Activated CD4-positive, alpha-beta T cell treated with anti-CD3 and anti-CD28 coated beads for 36 hours (primary cell): ENCODE measurements at regions of chr1 and their contacts with region 1.

Region 1: GRCh38 chr1:205485338-205486228 is 18.9 kb upstream of the CDK18 start:
- DNase-seq: peak; percentile 78
- ATAC-seq: peak; percentile 69
- H3K4me3 Mint-ChIP-seq: no peak overlapping the region
- H3K27ac Mint-ChIP-seq: no peak overlapping the region
- H3K4me1 Mint-ChIP-seq: peaks cover 10% of the 10 kb centered on the region
- H3K27me3 Mint-ChIP-seq: peaks cover 40% of the 10 kb centered on the region

Region 2: DNA sequence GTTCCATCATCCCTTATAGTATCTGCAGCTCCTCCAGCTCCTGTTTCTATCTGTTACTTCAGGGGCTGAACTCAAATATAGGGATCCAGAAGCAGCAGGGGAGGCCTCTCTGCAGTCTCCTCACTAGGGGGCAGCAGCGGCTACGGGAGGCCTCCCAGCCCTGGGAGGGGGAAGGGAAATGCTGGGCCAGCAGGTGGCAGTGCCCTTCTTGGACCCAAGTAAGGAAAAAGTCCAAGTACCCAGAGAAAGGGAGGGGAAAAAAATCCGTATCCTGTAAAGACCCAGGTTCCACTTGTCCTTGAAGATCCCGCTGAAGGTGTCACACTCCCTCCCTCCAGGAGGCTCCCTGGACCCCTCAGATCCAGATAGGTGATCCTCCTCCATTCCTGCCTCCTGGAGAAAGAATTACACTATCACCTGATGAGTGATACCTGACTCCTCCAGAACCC is 149.9 kb before region 1 on chr1:
- CTCF ChIA-PET with region 1: interaction called, 12 read pairs
- POLR2A ChIA-PET with region 1: no interaction called
- intact Hi-C with region 1: loop called (anchors 1 to 5 kb)
- DNase-seq: peak; percentile 92
- ATAC-seq: peak; percentile 96
- H3K4me3 Mint-ChIP-seq: no peak overlapping the region
- H3K27ac Mint-ChIP-seq: no peak overlapping the region
- H3K4me1 Mint-ChIP-seq: no peaks in the 10 kb centered on the region
- H3K27me3 Mint-ChIP-seq: no peaks in the 10 kb centered on the region

Region 3: GRCh38 chr1:205359771-205360565 is 125.6 kb before region 1 on chr1:
- CTCF ChIA-PET with region 1: interaction called, 82 read pairs
- POLR2A ChIA-PET with region 1: no interaction called
- intact Hi-C with region 1: no loop called
- DNase-seq: no peak
- ATAC-seq: no peak
- H3K4me3 Mint-ChIP-seq: no peak overlapping the region
- H3K27ac Mint-ChIP-seq: no peak overlapping the region
- H3K4me1 Mint-ChIP-seq: no peaks in the 10 kb centered on the region
- H3K27me3 Mint-ChIP-seq: peaks cover 15% of the 10 kb centered on the region

Region 4: GRCh38 chr1:205430696-205431305 is 54.8 kb before region 1 on chr1:
- CTCF ChIA-PET with region 1: interaction called, 6 read pairs
- POLR2A ChIA-PET with region 1: interaction called, 3 read pairs
- intact Hi-C with region 1: loop called in 1 of 2 experiments (anchors 2 kb)
- DNase-seq: peak; percentile 71
- ATAC-seq: peak; percentile 82
- H3K4me3 Mint-ChIP-seq: peak overlapping the region; percentile 73
- H3K27ac Mint-ChIP-seq: peak overlapping the region; percentile 67
- H3K4me1 Mint-ChIP-seq: peaks cover 6% of the 10 kb centered on the region
- H3K27me3 Mint-ChIP-seq: peaks cover 16% of the 10 kb centered on the region

Region 5: GRCh38 chr1:205500240-205501233 is 15.0 kb after region 1 on chr1:
- CTCF ChIA-PET with region 1: interaction called, 21 read pairs
- POLR2A ChIA-PET with region 1: no interaction called
- intact Hi-C with region 1: no loop called
- DNase-seq: no peak
- ATAC-seq: no peak
- H3K4me3 Mint-ChIP-seq: no peak overlapping the region
- H3K27ac Mint-ChIP-seq: no peak overlapping the region
- H3K4me1 Mint-ChIP-seq: peaks cover 12% of the 10 kb centered on the region
- H3K27me3 Mint-ChIP-seq: peaks cover 2% of the 10 kb centered on the region

Region 6: GRCh38 chr1:205528887-205529825 is 43.6 kb after region 1 on chr1:
- CTCF ChIA-PET with region 1: interaction called, 191 read pairs
- POLR2A ChIA-PET with region 1: no interaction called
- intact Hi-C with region 1: loop called (anchors 1 kb)
- DNase-seq: peak; percentile 91
- ATAC-seq: peak; percentile 90
- H3K4me3 Mint-ChIP-seq: no peak overlapping the region
- H3K27ac Mint-ChIP-seq: no peak overlapping the region
- H3K4me1 Mint-ChIP-seq: no peaks in the 10 kb centered on the region
- H3K27me3 Mint-ChIP-seq: no peaks in the 10 kb centered on the region